ENCODE measurements at regions of chr1 and their contacts with region 1.

Region 1: DNA sequence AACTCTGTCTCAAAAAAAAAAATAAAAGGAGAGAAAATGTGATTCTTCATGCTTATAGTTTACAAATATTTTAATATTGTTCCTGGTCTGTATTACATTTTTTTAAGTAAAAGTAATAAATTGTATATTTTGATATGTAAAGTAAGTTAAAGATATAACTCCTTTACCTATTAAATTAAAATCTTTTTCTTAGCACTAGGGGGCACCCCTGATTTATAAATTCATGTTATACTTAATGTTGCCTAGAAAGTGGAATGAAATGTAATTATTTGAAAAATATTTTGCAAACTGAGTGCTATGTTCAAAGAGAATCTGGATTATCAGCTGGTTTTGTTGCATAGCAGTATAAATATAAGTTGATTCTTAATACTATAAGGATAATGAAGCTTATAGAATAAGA is 49.2 kb downstream of the RALGPS2 start:
- DNase-seq: no peak
- ATAC-seq: no peak
- H3K4me3 ChIP-seq: no peak overlapping the region
- H3K27ac ChIP-seq: no peak overlapping the region
- H3K4me1 ChIP-seq: no peaks in the 10 kb centered on the region
- H3K27me3 ChIP-seq: no peaks in the 10 kb centered on the region
- CTCF ChIP-seq: peak; percentile 46

Region 2: GRCh38 chr1:178885869-178886268 is 111.6 kb after region 1 on chr1:
- intact Hi-C with region 1: no loop called
- DNase-seq: no peak
- ATAC-seq: no peak
- H3K4me3 ChIP-seq: no peak overlapping the region
- H3K27ac ChIP-seq: no peak overlapping the region
- H3K4me1 ChIP-seq: no peaks in the 10 kb centered on the region
- H3K27me3 ChIP-seq: no peaks in the 10 kb centered on the region
- CTCF ChIP-seq: no peak

Region 3: GRCh38 chr1:179002552-179003345 is 228.5 kb after region 1 on chr1:
- intact Hi-C with region 1: loop called (anchors 10 kb)
- DNase-seq: peak; percentile 78
- ATAC-seq: peak; percentile 90
- H3K4me3 ChIP-seq: no peak overlapping the region
- H3K27ac ChIP-seq: no peak overlapping the region
- H3K4me1 ChIP-seq: peaks cover 5% of the 10 kb centered on the region
- H3K27me3 ChIP-seq: no peaks in the 10 kb centered on the region
- CTCF ChIP-seq: peak; percentile 97

Measured in upper lobe of right lung (tissue), 1 donor.